ENCODE measurements at regions of chr1 and their contacts with region 1.

Region 1: GRCh38 chr1:62528015-62528414 is 69.3 kb upstream of the ANGPTL3 start:
- DNase-seq: no peak
- H3K4me3 ChIP-seq: no peak overlapping the region
- H3K27ac ChIP-seq: no peak overlapping the region
- H3K4me1 ChIP-seq: no peaks in the 10 kb centered on the region
- H3K27me3 ChIP-seq: no peaks in the 10 kb centered on the region
- CTCF ChIP-seq: no peak
- POLR2A ChIP-seq: no peak

Region 2: GRCh38 chr1:61941794-61942193 is 586.2 kb before region 1 on chr1:
- intact Hi-C with region 1: no loop called
- DNase-seq: no peak
- H3K4me3 ChIP-seq: no peak overlapping the region
- H3K27ac ChIP-seq: no peak overlapping the region
- H3K4me1 ChIP-seq: no peaks in the 10 kb centered on the region
- H3K27me3 ChIP-seq: no peaks in the 10 kb centered on the region
- CTCF ChIP-seq: no peak
- POLR2A ChIP-seq: no peak

Region 3: GRCh38 chr1:62493656-62494055 is 34.4 kb before region 1 on chr1:
- intact Hi-C with region 1: no loop called
- DNase-seq: no peak
- H3K4me3 ChIP-seq: no peak overlapping the region
- H3K27ac ChIP-seq: no peak overlapping the region
- H3K4me1 ChIP-seq: no peaks in the 10 kb centered on the region
- H3K27me3 ChIP-seq: no peaks in the 10 kb centered on the region
- CTCF ChIP-seq: no peak
- POLR2A ChIP-seq: no peak

Region 4: GRCh38 chr1:62676611-62677356 is 148.8 kb after region 1 on chr1:
- intact Hi-C with region 1: no loop called
- DNase-seq: no peak
- H3K4me3 ChIP-seq: no peak overlapping the region
- H3K27ac ChIP-seq: no peak overlapping the region
- H3K4me1 ChIP-seq: no peaks in the 10 kb centered on the region
- H3K27me3 ChIP-seq: no peaks in the 10 kb centered on the region
- CTCF ChIP-seq: no peak
- POLR2A ChIP-seq: no peak

Region 5: DNA sequence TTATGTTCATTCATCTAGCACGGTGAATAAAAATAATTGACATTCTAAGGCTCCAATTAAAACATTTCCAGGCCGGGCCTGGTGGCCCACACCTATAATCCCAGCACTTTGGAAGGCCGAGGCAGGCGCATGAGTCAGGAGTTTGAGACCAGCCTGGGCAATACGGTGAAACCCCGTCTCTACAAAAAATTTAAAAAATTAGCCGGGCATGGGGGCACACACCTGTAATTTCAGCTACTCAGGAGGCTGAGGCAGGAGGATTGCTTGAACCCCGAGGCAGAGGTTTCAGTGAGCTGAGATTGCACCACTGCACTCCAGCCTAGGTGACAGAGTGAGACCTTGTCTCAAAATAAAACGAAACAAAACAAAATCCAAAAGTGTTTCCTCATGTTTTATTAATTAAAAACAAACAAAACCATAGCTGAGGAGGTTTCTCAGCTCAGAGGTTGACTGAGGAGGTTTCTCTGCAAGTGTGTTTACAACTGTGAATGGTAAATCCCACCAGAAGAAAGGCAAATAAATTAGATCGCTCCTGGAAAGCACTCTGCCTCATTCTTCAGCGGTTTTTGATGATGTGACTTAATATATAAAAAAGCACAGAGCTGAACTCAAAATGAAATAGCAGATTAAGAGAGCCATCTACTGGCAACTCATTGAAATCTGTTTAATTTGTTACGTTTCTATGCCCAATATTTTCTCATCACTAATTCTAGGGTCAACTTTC is 218.2 kb after region 1 on chr1:
- intact Hi-C with region 1: loop called (anchors 2 kb)
- DNase-seq: no peak
- H3K4me3 ChIP-seq: no peak overlapping the region
- H3K27ac ChIP-seq: no peak overlapping the region
- H3K4me1 ChIP-seq: no peaks in the 10 kb centered on the region
- H3K27me3 ChIP-seq: no peaks in the 10 kb centered on the region
- CTCF ChIP-seq: peak in 3 of 4 experiments; percentile 46 to 75 (median 72)
- POLR2A ChIP-seq: no peak

Measured in prostate gland (tissue), 2 donors.